Activated B cell treated with CpG ODN at 0.5 μM for 24 hours (primary cell): ENCODE measurements at regions of chr3 and their contacts with region 1.

Region 1: GRCh38 chr3:97764407-97765238 is at the start of gene ARL6:
- DNase-seq: peak; percentile 65
- ATAC-seq: peak; percentile 90
- H3K4me3 Mint-ChIP-seq: peak within 1 kb of the TSS; percentile 99
- H3K27ac Mint-ChIP-seq: peak within 1 kb of the TSS; percentile 95
- H3K4me1 Mint-ChIP-seq: peaks cover 23% of the 10 kb centered on the region
- H3K27me3 Mint-ChIP-seq: no peaks in the 10 kb centered on the region
- CTCF ChIP-seq: no peak
- total RNA-seq, gene ARL6: 2.5 and 4.2 TPM in 2 replicates

Region 2: DNA sequence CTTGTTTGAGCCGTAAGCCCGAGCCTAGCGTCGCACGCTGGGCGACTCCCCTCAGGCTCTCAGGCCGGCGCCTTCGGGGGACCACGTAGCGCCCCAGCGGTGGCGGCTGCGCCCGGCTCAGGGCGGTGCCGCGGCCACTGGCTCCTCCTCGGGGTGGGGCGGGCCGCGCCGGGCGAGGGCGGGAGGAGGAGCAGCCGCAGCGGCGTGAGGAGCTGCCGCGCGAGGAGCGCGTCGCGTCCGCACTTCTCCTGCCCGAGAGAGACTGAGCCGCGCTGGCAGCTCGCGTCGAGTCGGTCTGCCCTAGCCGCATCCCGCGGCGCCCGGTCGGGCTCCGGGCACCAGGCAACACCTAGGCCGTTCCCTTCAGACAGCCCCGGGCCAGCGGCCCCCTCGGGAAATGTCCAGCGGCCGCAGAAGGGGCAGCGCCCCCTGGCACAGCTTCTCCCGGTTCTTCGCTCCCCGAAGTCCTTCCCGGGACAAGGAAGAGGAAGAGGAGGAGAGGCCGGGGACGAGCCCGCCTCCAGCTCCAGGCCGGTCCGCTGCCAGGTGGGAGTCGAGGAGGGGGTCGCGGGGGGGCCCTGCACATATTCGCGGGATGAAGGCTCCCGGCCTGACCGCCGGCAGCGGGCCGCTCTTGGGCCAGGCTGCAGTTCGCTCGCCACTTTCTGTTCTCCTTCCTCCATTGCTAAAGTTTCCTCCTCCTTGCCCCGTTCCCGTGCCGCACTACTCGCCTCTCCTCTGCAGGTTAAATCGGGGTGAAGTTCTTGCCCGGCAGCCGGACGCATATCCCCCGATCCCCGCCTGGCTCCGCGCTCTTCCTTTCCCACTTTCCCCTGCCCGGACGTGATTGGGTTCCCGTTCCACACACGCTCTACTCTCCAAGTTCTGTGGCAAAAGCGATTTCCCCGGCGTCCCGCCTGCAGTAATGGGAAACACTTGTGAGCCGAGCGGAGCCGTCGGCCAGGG is 57.5 kb after region 1 on chr3 and contains the start of gene CRYBG3:
- CTCF ChIA-PET with region 1: no interaction called
- POLR2A ChIA-PET with region 1: interaction called, 5 read pairs
- intact Hi-C with region 1: loop called (anchors 1 kb)
- DNase-seq: peak; percentile 80
- ATAC-seq: peak; percentile 99
- H3K4me3 Mint-ChIP-seq: peak within 1 kb of the TSS; percentile 88
- H3K27ac Mint-ChIP-seq: peak within 1 kb of the TSS; percentile 47
- H3K4me1 Mint-ChIP-seq: peaks cover 21% of the 10 kb centered on the region
- H3K27me3 Mint-ChIP-seq: peaks cover 44% of the 10 kb centered on the region
- CTCF ChIP-seq: no peak
- total RNA-seq, gene CRYBG3: 1.5 TPM in 2 replicates

Region 3: DNA sequence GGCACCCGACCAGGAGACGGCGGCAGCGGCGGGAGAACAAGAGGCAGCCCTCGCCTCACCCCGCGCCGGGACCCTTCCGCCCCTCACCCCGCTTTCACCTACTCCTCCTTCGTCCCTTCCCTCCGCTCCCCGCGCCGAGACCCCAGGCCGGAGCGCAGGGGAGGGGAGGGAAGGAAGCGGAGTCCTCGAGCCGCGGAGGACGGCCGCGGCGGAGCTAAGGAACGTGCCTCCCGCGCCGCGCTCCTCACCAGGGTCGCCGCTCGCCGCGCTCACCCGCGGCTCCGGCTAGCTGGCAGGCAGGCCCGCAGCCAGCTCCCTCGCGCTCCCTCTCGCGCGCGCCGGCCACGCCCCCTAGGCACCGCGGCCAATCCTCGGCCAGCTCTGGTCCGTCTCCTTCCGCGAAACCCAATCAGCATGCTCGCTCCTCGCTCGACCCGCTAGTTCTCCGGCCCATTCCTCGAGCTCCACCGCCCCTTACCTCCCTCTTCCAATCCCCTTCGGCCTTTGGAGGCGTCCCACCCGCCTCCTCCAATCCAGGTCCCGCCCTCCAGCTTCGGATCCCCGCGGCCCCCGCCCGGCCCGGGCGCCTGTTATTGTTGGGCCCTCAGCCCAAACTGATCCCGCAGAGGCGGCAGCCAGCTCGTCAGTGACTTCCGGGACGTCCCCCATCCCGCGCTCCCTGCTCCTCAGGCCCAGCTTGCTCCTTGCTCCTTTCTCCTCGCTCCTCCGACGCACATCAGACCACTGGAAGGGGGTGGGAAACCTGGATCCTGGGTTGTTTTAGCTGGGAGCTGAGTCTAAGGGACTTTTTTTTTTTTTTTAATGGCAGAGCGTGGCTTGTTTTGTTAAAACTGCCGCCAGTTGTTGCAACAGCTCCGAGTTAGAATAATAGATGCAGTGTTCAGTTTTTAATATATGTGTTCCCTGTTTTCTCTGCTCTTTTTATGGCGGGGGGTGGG is 1137.0 kb after region 1 on chr3 and contains the start of gene DCBLD2:
- CTCF ChIA-PET with region 1: no interaction called
- POLR2A ChIA-PET with region 1: interaction called, 3 read pairs
- intact Hi-C with region 1: loop called (anchors 2 kb)
- DNase-seq: peak; percentile 86
- ATAC-seq: peak; percentile 98
- H3K4me3 Mint-ChIP-seq: peak within 1 kb of the TSS; percentile 88
- H3K27ac Mint-ChIP-seq: peak within 1 kb of the TSS; percentile 73
- H3K4me1 Mint-ChIP-seq: peaks cover 19% of the 10 kb centered on the region
- H3K27me3 Mint-ChIP-seq: peaks cover 12% of the 10 kb centered on the region
- CTCF ChIP-seq: no peak
- total RNA-seq, gene DCBLD2: 0.95 and 1.8 TPM in 2 replicates